ENCODE measurements at regions of chr6 and their contacts with region 1.

Region 1: DNA sequence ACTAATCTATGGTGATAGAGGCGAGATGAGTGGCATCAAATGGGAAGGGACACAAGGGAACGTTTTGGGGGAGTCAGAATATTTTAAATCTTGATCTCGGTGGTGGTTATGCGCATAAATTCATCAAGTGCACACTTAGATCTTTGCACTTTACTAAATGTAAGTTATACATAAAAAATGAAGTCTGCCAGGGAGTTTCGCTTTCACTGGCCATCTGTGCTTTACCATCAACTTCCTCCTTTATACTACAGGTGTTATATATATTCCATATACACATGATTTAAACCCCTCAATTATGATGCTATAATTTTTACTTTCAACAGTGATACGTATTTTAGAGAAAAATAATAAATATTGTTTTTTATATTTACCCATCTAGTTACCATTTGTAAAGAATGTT is 97.6 kb upstream of the AKIRIN2 start:
- DNase-seq: no peak
- ATAC-seq: peak; percentile 29
- H3K4me3 ChIP-seq: no peak overlapping the region
- H3K27ac ChIP-seq: peak overlapping the region; percentile 36; the same call in 1 of the 2 replicates
- H3K4me1 ChIP-seq: peaks cover 34% of the 10 kb centered on the region
- H3K27me3 ChIP-seq: no peaks in the 10 kb centered on the region
- CTCF ChIP-seq: no peak
- EP300 ChIP-seq: no peak
- POLR2A ChIP-seq: no peak
- RAD21 ChIP-seq: no peak

Region 2: DNA sequence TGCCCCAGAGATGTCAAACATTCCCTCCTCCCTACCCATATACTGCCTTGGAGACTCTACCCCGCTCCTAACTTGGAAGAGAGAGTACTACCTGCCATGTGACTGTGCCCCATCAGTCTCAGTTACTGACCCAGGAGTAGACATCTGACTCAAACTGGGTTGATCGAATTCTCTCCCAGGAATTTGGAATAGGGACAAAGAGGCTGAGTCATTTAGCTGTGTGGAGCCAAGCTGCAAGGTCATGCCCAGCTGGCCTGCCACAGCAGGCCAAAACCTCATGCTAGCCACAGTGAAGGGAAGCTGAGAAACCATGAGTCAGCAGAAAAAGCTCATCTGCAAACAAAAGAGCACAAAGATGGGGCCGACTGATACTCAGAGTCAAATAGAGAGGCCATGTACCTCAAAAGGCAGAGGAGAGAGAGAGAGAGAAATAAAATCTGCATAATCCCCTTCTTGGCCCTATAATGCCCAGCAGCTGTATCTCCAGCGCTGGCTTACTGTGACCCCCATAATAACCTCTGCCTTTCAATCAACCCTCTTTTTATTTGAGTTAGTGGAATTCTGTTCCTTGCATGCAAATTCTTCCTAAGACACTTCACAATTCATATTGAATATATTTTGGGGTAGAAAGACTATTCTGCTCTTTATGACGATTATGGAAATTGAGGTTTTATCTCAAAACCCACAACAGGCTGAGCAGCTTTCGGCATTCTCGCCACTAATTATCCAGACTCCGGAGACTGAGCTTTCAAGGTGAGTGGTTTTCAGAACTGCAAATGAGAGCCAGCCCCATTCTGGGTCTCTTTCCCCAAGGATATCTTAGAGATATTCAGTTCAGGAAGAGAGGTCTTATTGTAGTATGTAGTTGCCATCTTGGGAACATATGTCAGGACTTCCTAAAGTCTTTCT is 76.2 kb before region 1 on chr6:
- CTCF ChIA-PET with region 1: no interaction called
- POLR2A ChIA-PET with region 1: interaction called, 6 read pairs
- RAD21 ChIA-PET with region 1: interaction called, 10 read pairs
- SMC1A ChIA-PET with region 1: interaction called, 8 read pairs
- in situ Hi-C with region 1: no loop called
- intact Hi-C with region 1: loop called (anchors 2 kb)
- DNase-seq: peak; percentile 77
- ATAC-seq: peak; percentile 77
- H3K4me3 ChIP-seq: peak overlapping the region; percentile 23; the same call in 1 of the 2 replicates
- H3K27ac ChIP-seq: peak overlapping the region; percentile 92
- H3K4me1 ChIP-seq: peaks cover 38% of the 10 kb centered on the region
- H3K27me3 ChIP-seq: no peaks in the 10 kb centered on the region
- CTCF ChIP-seq: no peak
- EP300 ChIP-seq: peak; percentile 26 to 49; a peak in 2 of 4 replicates
- POLR2A ChIP-seq: no peak
- RAD21 ChIP-seq: no peak

Region 3: DNA sequence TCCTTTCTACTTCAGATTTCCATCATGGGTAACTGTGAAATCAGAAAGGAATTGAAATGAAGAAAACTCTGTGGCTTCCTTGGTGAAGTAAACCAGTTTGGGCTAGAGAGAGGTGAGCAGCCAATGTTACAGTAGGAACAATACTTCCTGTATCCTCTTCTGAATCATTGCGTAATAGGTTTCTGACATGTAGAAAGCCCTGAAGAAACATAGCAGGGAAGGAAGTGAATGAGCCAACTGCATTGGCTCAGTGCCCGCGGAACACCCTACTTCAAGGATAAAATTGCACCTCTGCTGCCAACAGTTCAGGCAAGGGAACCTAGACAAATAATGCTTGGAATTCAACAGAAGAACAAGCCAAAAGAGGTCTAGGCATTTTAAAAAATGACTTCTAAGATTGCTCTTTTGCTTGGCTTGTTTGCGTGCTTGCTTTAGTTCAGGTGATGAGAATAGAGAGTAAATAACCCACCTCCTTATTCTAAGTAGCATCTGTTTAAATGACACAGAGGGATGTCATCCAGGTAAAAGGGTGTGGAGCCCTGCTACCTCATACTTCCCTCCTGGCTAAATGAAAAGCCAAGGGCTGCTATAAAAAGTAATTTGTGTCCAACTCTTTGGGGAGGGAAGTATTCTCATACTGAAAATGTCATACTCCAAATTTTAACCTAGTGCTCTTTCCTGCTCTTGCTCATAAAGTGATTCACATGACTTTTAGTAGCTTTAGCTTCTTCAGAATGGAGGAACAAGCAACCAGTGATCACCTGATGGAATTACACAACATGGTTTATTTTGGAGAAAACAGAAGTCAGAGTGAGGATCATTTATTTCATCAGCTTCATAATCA is 67.6 kb before region 1 on chr6:
- CTCF ChIA-PET with region 1: interaction called, 3 read pairs
- POLR2A ChIA-PET with region 1: interaction called, 3 read pairs
- RAD21 ChIA-PET with region 1: interaction called, 7 read pairs
- SMC1A ChIA-PET with region 1: interaction called, 5 read pairs
- in situ Hi-C with region 1: no loop called
- intact Hi-C with region 1: loop called (anchors 1 kb)
- DNase-seq: peak; percentile 71
- ATAC-seq: peak; percentile 87
- H3K4me3 ChIP-seq: peak overlapping the region; percentile 9; the same call in 1 of the 2 replicates
- H3K27ac ChIP-seq: peak overlapping the region; percentile 89
- H3K4me1 ChIP-seq: peaks cover 37% of the 10 kb centered on the region
- H3K27me3 ChIP-seq: no peaks in the 10 kb centered on the region
- CTCF ChIP-seq: no peak
- EP300 ChIP-seq: peak in 1 of 2 experiments; percentile 27; a peak in 1 of 4 replicates
- POLR2A ChIP-seq: 0 out of 2 replicates have a peak, but pooled peaks have one; percentile 22
- RAD21 ChIP-seq: 0 out of 2 replicates have a peak, but pooled peaks have one; percentile 2

Region 4: DNA sequence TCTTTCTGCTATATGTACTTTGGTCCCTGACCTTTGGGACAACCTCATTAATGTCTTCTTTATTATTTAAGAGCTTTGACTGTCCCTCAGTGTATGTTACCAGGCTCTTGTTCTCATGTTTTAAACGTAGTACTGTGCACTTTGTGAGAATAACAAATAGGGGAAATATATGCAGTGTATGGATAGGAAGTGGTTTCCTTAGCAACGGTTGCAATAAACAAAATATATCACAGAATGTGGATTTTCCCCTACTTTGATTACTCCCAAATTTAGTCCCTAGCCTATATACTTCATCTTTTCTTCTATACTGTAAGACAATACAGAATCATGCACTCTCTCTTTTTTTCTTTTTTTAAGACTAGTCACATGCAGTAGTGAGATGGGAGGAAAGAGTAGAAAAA is 26.2 kb after region 1 on chr6:
- CTCF ChIA-PET with region 1: interaction called, 5 read pairs
- POLR2A ChIA-PET with region 1: interaction called, 3 read pairs
- RAD21 ChIA-PET with region 1: interaction called, 24 read pairs
- SMC1A ChIA-PET with region 1: interaction called, 16 read pairs
- in situ Hi-C with region 1: no loop called
- intact Hi-C with region 1: no loop called
- DNase-seq: no peak
- ATAC-seq: peak; percentile 87
- H3K4me3 ChIP-seq: no peak overlapping the region
- H3K27ac ChIP-seq: no peak overlapping the region
- H3K4me1 ChIP-seq: peaks cover 15% of the 10 kb centered on the region
- H3K27me3 ChIP-seq: no peaks in the 10 kb centered on the region
- CTCF ChIP-seq: no peak
- EP300 ChIP-seq: no peak
- POLR2A ChIP-seq: no peak
- RAD21 ChIP-seq: no peak